ENCODE measurements at regions of chr11 and their contacts with region 1.

Region 1: GRCh38 chr11:58654079-58654907 is 31.8 kb downstream of the CNTF start:
- DNase-seq: peak; percentile 29
- H3K4me3 ChIP-seq: no peak overlapping the region
- H3K27ac ChIP-seq: no peak overlapping the region
- H3K27me3 ChIP-seq: no peaks in the 10 kb centered on the region
- CTCF ChIP-seq: peak; percentile 93

Region 2: DNA sequence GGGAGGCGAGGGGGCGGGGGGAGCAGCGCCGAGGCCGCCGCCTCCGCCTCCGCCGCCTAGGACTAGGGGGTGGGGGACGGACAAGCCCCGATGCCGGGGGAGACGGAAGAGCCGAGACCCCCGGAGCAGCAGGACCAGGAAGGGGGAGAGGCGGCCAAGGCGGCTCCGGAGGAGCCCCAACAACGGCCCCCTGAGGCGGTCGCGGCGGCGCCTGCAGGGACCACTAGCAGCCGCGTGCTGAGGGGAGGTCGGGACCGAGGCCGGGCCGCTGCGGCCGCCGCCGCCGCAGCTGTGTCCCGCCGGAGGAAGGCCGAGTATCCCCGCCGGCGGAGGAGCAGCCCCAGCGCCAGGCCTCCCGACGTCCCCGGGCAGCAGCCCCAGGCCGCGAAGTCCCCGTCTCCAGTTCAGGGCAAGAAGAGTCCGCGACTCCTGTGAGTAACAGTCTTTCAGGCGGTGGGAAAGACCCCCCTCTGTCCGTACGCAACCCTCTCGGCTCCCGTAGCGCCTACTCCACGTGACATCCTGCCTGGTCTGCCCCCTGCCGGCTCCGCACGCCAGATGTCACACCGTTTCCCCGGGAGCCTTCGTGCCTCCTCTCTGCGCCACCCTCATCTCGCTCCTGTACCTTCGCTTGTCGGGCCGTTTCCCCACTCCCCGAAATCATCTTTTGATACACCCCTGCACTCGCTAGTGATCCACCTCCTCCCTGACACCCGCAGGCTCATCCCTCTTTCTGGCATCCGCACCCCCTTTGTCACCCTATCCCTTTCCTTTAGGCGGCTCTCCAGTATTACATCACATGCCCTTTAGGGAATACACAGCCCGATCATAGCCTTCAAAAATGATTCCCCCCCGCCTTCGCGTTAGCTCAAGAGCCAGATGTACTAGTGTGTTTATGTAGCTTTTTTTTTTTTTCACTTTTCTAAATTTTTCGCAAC is 74.8 kb before region 1 on chr11:
- CTCF ChIA-PET with region 1: interaction called, 24 read pairs
- POLR2A ChIA-PET with region 1: no interaction called
- DNase-seq: peak; percentile 78
- H3K4me3 ChIP-seq: peak overlapping the region; percentile 85
- H3K27ac ChIP-seq: peak overlapping the region; percentile 94
- H3K27me3 ChIP-seq: no peaks in the 10 kb centered on the region
- CTCF ChIP-seq: peak; percentile 76

Region 3: GRCh38 chr11:58640386-58641023 is 13.8 kb before region 1 on chr11:
- CTCF ChIA-PET with region 1: interaction called, 32 read pairs
- POLR2A ChIA-PET with region 1: no interaction called
- DNase-seq: no peak
- H3K4me3 ChIP-seq: no peak overlapping the region
- H3K27ac ChIP-seq: no peak overlapping the region
- H3K27me3 ChIP-seq: peaks cover 4% of the 10 kb centered on the region
- CTCF ChIP-seq: no peak

Region 4: GRCh38 chr11:58675334-58676155 is 21.3 kb after region 1 on chr11:
- CTCF ChIA-PET with region 1: interaction called, 18 read pairs
- POLR2A ChIA-PET with region 1: no interaction called
- DNase-seq: peak; percentile 26
- H3K4me3 ChIP-seq: no peak overlapping the region
- H3K27ac ChIP-seq: no peak overlapping the region
- H3K27me3 ChIP-seq: peaks cover 7% of the 10 kb centered on the region
- CTCF ChIP-seq: peak; percentile 100

Region 5: DNA sequence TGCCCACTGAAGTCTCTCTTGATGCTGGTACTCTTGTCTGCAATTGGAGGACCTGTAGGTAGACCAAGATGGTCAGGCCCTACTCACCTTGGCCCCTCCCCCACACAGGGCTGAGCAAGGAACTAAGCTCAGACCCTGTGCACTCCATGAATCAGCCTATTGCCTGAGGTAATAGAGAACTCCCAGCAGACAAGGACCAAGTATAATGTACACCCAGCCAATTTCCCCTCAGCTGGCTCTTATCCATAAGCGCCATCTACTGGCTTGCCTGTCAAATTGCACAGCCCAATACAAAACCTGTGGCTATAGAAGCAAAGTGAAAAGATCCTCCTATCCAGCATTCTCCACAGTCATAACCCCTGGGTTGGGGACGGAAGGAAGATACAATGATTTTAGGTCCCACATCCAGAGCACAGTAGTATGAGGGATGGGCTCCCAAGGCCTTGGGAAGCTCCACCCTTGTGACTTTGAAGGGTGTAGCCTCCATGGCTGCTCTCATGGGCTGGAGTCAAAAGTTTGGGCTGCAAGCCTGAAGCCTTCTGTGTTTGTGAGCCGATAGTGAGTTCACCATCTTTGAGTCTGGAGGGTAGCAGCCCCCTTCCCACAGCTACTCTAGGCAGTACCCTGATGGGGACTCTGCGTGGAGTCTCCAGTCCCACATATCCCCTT is 134.2 kb after region 1 on chr11:
- CTCF ChIA-PET with region 1: interaction called, 13 read pairs
- POLR2A ChIA-PET with region 1: no interaction called
- DNase-seq: no peak
- H3K4me3 ChIP-seq: no peak overlapping the region
- H3K27ac ChIP-seq: no peak overlapping the region
- H3K27me3 ChIP-seq: no peaks in the 10 kb centered on the region
- CTCF ChIP-seq: peak; percentile 75

Region 6: DNA sequence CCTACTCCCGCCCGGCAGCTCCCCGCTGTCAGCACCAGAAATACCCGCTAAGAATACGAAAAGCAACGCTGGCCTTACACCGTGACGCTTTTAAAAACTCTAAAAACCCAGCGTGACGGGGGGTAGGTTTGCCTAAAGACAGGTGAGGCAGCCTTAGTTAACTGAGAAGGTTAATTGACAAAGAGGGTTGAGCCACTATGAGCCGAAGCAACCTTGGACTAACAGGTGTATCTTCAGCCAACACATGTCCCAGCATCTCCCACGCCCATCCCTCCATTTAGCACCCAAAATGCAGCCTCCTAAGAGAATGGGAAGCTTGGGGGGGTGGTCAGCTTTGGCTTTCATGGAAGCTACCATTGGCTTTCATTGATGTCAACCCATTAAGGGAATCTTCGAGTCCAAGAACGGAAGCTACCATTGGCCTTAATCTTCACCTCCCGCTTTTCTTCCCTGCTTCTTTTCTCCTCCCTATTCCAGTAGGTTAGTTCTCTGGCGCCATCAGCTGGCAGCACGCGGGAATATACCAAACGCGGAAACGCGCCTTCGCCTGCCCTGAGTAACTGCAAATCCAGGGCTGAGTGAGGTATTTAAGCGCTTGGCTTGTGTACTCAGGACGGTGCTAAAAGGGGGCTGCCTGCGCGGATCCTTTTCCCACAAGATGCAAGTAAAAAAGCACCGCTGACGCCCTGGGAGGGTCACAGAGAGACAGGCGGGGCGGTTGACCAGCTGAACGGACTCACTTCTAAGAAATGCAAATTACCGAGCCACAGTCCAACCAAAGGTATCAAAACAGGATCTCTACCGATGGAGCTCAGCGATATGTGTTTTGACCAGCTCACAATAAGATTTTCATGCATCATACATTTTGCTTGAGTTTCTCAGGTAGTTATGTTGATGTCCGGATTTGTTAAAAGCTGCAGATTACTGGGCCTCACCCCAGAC is 246.5 kb after region 1 on chr11:
- CTCF ChIA-PET with region 1: interaction called, 10 read pairs
- POLR2A ChIA-PET with region 1: no interaction called
- DNase-seq: peak; percentile 61
- H3K4me3 ChIP-seq: peak overlapping the region; percentile 44
- H3K27ac ChIP-seq: no peak overlapping the region
- H3K27me3 ChIP-seq: no peaks in the 10 kb centered on the region
- CTCF ChIP-seq: peak; percentile 75